K562 (cell line): ENCODE measurements at regions of chr7 and their contacts with region 1.

Region 1: DNA sequence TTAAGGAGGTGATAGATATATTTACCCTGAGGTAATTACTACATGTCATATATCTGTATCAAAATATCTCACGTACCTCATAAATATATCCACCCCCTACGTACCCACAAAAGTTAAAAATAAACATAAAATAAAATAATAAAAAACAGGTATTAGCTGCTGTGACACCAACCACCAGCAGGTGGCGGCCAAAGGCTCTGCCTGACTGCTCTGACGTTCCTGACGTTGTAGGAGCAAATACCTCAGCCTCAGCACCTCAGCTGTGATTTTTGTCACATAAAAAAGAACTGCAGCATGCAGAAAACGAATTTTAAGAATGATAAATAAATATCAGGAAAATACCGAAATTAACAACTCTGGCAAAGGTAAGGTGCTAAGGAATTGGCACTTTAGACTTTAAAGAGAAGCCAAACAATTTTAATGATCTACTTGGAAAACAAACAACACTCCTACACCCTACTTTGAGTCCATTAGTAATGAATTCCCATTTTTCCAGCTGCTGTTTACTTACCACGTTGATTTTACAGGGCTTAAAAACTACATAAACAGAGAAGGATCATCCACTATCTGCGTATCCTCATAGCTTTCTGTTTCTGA is 125.4 kb upstream of the TARP start:
- DNase-seq: peak; percentile 44 to 62 (median 52)
- ATAC-seq: peak; percentile 84
- H3K4me3 ChIP-seq: no peak overlapping the region
- H3K27ac ChIP-seq: no peak overlapping the region
- H3K4me1 ChIP-seq: no peaks in the 10 kb centered on the region
- H3K27me3 ChIP-seq: no peaks in the 10 kb centered on the region
- CTCF ChIP-seq: peak; percentile 78 to 91 (median 78)
- EP300 ChIP-seq: no peak
- POLR2A ChIP-seq: no peak
- RAD21 ChIP-seq: peak; percentile 67 to 70

Region 2: GRCh38 chr7:38369816-38370493 is 28.9 kb before region 1 on chr7:
- CTCF ChIA-PET with region 1: no interaction called
- POLR2A ChIA-PET with region 1: no interaction called
- in situ Hi-C with region 1: no loop called
- intact Hi-C with region 1: no loop called
- DNase-seq: peak; percentile 54 to 83 (median 64)
- ATAC-seq: peak; percentile 97
- H3K4me3 ChIP-seq: no peak overlapping the region
- H3K27ac ChIP-seq: no peak overlapping the region
- H3K4me1 ChIP-seq: no peaks in the 10 kb centered on the region
- H3K27me3 ChIP-seq: no peaks in the 10 kb centered on the region
- CTCF ChIP-seq: peak; percentile 76 to 89 (median 83)
- EP300 ChIP-seq: no peak
- POLR2A ChIP-seq: no peak
- RAD21 ChIP-seq: no peak; a peak in 1 of 4 replicates

Region 3: DNA sequence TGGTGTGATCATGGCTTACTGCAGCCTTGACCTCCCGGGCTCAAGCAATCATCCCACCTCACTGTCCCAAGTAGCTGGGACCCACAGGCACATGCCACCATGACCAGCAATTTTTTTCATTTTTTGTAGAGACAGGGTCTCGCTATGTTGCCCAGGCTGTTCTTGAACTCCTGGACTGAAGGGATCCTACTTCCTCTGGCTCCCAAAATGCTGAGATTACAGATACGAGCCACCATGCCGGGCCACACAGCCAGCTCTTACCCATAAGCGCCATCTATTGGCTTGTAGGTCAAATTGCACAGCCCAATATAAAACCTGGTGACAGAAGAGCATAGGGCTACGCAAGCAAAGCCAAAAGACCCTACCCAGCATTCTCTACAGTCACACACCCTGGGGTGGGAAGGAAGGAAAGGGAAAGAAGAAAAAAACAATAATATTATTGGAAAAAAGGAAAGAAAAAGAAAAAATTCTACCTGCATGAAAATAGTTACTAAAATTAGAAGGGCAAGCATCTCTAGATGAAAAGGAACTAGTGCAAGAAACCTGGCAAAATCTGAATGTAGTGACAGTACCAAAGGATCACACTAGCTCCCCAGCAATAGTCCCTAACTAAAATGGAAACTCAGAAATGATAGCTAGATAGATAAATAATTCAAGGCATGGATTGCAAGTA is 261.7 kb after region 1 on chr7:
- CTCF ChIA-PET with region 1: interaction called, 8 read pairs
- POLR2A ChIA-PET with region 1: interaction called, 3 read pairs
- in situ Hi-C with region 1: loop called (anchors 5 kb)
- intact Hi-C with region 1: loop called (anchors 1 kb)
- DNase-seq: peak; percentile 19 to 50 (median 34)
- ATAC-seq: peak; percentile 90
- H3K4me3 ChIP-seq: no peak overlapping the region
- H3K27ac ChIP-seq: no peak overlapping the region
- H3K4me1 ChIP-seq: no peaks in the 10 kb centered on the region; a peak in 1 of 5 replicates
- H3K27me3 ChIP-seq: peaks cover 2 to 13% of the 10 kb centered on the region in 2 experiments; a peak in 2 of 5 replicates
- CTCF ChIP-seq: peak; percentile 74 to 81 (median 81)
- EP300 ChIP-seq: no peak
- POLR2A ChIP-seq: no peak
- RAD21 ChIP-seq: peak; percentile 54 to 73

Region 4: GRCh38 chr7:38908759-38909335 is 510.0 kb after region 1 on chr7 and contains the start of gene VPS41:
- CTCF ChIA-PET with region 1: no interaction called
- POLR2A ChIA-PET with region 1: no interaction called
- in situ Hi-C with region 1: no loop called
- intact Hi-C with region 1: no loop called
- DNase-seq: peak; percentile 76 to 84 (median 80)
- ATAC-seq: peak; percentile 98
- H3K4me3 ChIP-seq: peak within 1 kb of the TSS; percentile 69
- H3K27ac ChIP-seq: peak within 1 kb of the TSS; percentile 46
- H3K4me1 ChIP-seq: peaks cover 0 to 5% of the 10 kb centered on the region in 2 experiments; a peak in 2 of 5 replicates
- H3K27me3 ChIP-seq: no peaks in the 10 kb centered on the region
- CTCF ChIP-seq: no peak
- EP300 ChIP-seq: no peak
- POLR2A ChIP-seq: peak; percentile 71
- RAD21 ChIP-seq: no peak
- polyA plus RNA-seq, gene VPS41: 21.9 to 23.0 TPM

Region 5: GRCh38 chr7:39525926-39526325 is 1127.1 kb after region 1 on chr7:
- CTCF ChIA-PET with region 1: no interaction called
- POLR2A ChIA-PET with region 1: no interaction called
- in situ Hi-C with region 1: loop called (anchors 25 kb)
- intact Hi-C with region 1: loop called (anchors 2 kb)
- DNase-seq: no peak
- ATAC-seq: no peak
- H3K4me3 ChIP-seq: no peak overlapping the region
- H3K27ac ChIP-seq: no peak overlapping the region
- H3K4me1 ChIP-seq: no peaks in the 10 kb centered on the region
- H3K27me3 ChIP-seq: peaks cover 9 to 15% of the 10 kb centered on the region in 2 experiments
- CTCF ChIP-seq: no peak
- EP300 ChIP-seq: no peak
- POLR2A ChIP-seq: no peak
- RAD21 ChIP-seq: no peak